ENCODE measurements at regions of chr16 and their contacts with region 1.

Region 1: DNA sequence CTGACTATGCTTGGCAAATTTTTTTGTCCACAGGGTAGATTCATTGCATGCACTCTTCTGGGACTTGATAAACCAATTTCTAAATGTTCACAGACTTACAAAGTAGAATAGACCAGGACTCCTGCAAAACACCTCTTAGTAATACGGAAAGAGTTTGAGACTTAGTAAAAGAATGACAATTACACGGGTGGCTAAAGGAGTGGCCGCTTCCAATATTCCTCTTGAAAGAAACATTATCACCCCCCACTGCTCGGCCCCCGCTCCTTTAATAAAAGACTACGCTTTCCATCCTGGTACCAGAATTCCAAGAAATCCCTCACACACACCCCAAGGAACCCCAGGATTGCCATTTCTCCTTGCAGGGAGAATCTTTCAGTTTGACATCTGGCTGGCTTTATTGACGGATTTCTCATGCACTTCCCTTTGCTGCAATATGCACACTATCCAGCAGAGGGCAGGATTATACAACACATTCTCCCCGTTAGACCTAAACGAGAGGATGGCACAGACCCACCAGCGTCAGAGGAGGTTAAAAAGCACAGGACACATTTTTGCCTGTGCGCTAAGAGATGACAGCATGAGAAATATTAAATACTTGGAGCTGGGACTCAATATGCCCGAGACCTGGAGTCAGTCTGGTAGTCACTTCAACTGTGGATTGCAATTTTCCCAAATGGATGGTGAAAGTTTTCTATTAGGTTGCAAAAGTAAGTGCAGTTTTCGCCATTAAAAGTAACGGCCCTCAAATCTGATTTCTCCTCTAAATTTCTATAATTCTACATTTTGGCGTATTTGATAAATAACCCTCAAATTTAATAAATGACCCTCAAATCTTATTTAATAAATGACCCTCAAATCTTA is 46.6 kb upstream of the NUDT7 start:
- DNase-seq: peak; percentile 68
- H3K4me3 ChIP-seq: no peak overlapping the region
- H3K27ac ChIP-seq: no peak overlapping the region
- H3K4me1 ChIP-seq: peaks cover 11% of the 10 kb centered on the region
- CTCF ChIP-seq: peak; percentile 94

Region 2: GRCh38 chr16:76946879-76947278 is 728.8 kb before region 1 on chr16:
- CTCF ChIA-PET with region 1: no interaction called
- POLR2A ChIA-PET with region 1: no interaction called
- intact Hi-C with region 1: no loop called
- DNase-seq: no peak
- H3K4me3 ChIP-seq: no peak overlapping the region
- H3K27ac ChIP-seq: no peak overlapping the region
- H3K4me1 ChIP-seq: no peaks in the 10 kb centered on the region
- CTCF ChIP-seq: no peak

Region 3: DNA sequence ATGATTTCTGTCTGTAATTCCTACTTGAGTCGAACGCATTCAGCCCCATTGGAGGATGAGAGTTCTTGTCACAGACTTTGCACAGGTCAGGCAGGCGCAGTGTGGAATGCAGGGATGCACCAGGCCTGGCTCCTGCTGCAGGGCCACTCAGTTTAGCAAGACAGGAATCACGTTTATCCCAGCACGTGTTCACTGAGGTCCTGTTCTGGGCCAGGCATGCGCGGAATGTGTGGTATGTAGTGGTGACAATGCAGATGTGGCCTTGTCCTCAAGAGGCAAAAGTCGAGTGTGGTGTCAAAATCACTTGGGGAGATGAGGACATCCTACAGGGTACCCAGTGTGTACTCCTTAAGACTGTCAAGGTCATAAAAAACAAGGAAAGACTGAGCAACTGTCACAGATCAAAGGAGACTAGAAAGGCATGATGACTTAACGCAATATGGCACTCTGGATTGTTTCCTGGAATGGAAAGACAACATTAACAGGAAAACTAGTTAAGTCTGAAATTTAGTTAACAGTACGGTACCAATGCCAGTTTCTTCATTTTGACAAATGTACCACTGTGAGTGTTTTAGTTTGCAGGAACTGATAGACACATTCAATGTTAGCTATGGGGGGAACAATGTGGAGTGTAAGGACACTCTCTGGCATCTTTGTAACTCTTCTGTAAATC is 119.4 kb before region 1 on chr16:
- CTCF ChIA-PET with region 1: no interaction called
- POLR2A ChIA-PET with region 1: no interaction called
- intact Hi-C with region 1: no loop called
- DNase-seq: no peak
- H3K4me3 ChIP-seq: no peak overlapping the region
- H3K27ac ChIP-seq: no peak overlapping the region
- H3K4me1 ChIP-seq: no peaks in the 10 kb centered on the region
- CTCF ChIP-seq: no peak

Region 4: DNA sequence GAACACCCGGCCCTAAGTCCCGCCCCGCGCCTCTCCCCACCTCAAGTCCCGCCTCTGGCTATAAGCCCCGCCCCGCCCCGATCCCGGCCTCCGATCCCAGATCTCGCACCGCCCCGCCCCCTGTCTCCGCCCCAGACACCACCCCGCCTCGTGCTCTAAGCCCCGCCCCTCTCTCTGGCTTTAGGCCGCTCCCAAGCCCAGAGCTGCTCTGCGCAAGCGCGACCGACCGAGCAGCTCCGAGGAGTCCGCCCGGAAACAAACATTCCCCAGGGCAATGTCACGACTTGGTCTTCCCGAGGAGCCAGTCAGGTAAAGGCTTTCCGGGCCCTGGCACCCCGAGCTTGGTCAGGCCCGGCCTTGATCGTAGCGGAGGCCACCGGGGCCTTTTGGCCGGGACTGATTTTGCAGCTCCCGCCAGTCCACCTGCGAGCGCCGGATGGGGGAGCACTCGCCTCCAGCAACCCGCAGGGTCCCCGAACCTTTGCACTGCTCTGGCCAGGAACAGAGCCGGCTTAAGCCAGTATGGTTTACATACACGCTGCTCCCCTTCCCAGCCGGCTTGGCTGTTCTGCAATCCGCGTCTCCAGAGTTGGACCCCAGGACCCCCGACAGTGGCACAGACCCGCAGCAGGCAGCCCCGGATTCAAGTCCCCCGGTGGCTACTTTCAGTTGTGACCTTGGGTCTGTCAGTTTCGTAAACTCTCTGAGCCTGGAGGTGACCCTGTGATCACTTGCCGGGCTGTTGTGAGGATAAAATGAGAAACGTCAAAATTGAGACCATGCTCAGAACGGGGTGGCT is 46.8 kb after region 1 on chr16 and contains the start of gene NUDT7:
- CTCF ChIA-PET with region 1: no interaction called
- POLR2A ChIA-PET with region 1: no interaction called
- intact Hi-C with region 1: loop called (anchors 2 kb)
- DNase-seq: peak; percentile 96
- H3K4me3 ChIP-seq: peak within 1 kb of the TSS; percentile 82
- H3K27ac ChIP-seq: peak within 1 kb of the TSS; percentile 44
- H3K4me1 ChIP-seq: peaks cover 17% of the 10 kb centered on the region
- CTCF ChIP-seq: peak; percentile 67
- total RNA-seq, gene NUDT7: 4.4 and 9.1 TPM in 2 replicates

Region 5: GRCh38 chr16:77782694-77783093 is 107.0 kb after region 1 on chr16:
- CTCF ChIA-PET with region 1: no interaction called
- POLR2A ChIA-PET with region 1: no interaction called
- intact Hi-C with region 1: loop called (anchors 2 kb)
- DNase-seq: peak; percentile 3
- H3K4me3 ChIP-seq: no peak overlapping the region
- H3K27ac ChIP-seq: no peak overlapping the region
- H3K4me1 ChIP-seq: no peaks in the 10 kb centered on the region
- CTCF ChIP-seq: peak; percentile 67

Region 6: GRCh38 chr16:77971306-77972271 is 295.9 kb after region 1 on chr16:
- CTCF ChIA-PET with region 1: no interaction called
- POLR2A ChIA-PET with region 1: interaction called, 7 read pairs
- intact Hi-C with region 1: loop called (anchors 1 kb)
- DNase-seq: peak; percentile 72
- H3K4me3 ChIP-seq: no peak overlapping the region
- H3K27ac ChIP-seq: no peak overlapping the region
- H3K4me1 ChIP-seq: no peaks in the 10 kb centered on the region
- CTCF ChIP-seq: peak; percentile 92

Region 7: GRCh38 chr16:78002915-78003538 is 327.3 kb after region 1 on chr16:
- CTCF ChIA-PET with region 1: interaction called, 4 read pairs
- POLR2A ChIA-PET with region 1: no interaction called
- intact Hi-C with region 1: loop called (anchors 10 kb)
- DNase-seq: peak; percentile 79
- H3K4me3 ChIP-seq: no peak overlapping the region
- H3K27ac ChIP-seq: no peak overlapping the region
- H3K4me1 ChIP-seq: no peaks in the 10 kb centered on the region
- CTCF ChIP-seq: peak; percentile 91

Measured in OCI-LY7 (cell line).